CD4-positive, alpha-beta T cell (primary cell): ENCODE measurements at regions of chr3 and their contacts with region 1.

Region 1: DNA sequence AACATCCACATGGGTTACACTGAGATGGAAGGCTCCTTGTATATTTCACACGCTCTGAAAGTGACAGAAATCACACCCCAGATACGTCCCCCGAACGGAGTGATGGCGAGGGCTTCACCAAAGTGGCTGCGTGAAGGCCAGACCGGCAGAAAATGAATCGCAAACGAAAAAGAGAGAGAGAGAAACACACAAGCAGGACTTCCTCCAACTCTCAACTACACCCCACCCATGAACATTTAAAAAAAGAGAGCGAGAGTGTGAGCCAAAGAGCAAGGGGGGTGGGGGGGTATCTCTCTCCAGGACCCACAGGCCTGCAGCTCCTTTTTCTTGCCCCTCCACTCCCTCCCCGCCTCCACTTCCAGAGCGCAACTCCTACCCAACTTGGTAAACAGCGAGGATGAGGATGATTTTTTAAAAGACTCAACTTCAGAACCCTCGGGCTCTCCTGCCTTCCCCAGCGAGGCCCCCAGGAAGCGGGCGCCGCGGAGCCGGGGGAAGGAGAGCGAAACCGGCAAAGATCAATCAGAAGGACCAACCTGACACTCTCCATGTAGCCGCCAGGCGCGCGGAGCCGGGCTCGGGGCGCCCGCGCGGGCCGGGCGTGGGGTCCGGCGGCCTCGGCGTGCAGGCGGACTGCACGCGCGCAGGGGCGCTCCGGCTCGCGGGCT is 519.1 kb downstream of the FOXP1 start:
- DNase-seq: peak; percentile 45 to 86 (median 64)
- ATAC-seq: peak; percentile 41
- H3K4me3 ChIP-seq: peak overlapping the region; percentile 71
- H3K4me3 Mint-ChIP-seq: no peak overlapping the region
- H3K27ac ChIP-seq: peak overlapping the region; percentile 72 to 97
- H3K27ac Mint-ChIP-seq: no peak overlapping the region
- H3K4me1 ChIP-seq: peaks cover 29% of the 10 kb centered on the region
- H3K4me1 Mint-ChIP-seq: peaks cover 62% of the 10 kb centered on the region
- H3K27me3 ChIP-seq: no peaks in the 10 kb centered on the region
- H3K27me3 Mint-ChIP-seq: no peaks in the 10 kb centered on the region
- CTCF ChIP-seq: no peak

Region 2: GRCh38 chr3:71006810-71007785 is 57.3 kb before region 1 on chr3:
- CTCF ChIA-PET with region 1: interaction called, 6 read pairs
- POLR2A ChIA-PET with region 1: interaction called, 6 read pairs
- intact Hi-C with region 1: loop called (anchors 2 kb)
- DNase-seq: peak in 3 of 14 experiments; percentile 61 to 66 (median 63)
- ATAC-seq: no peak
- H3K4me3 ChIP-seq: no peak overlapping the region
- H3K4me3 Mint-ChIP-seq: peak overlapping the region; percentile 22
- H3K27ac ChIP-seq: no peak overlapping the region
- H3K27ac Mint-ChIP-seq: peak overlapping the region; percentile 96
- H3K4me1 ChIP-seq: peaks cover 38% of the 10 kb centered on the region
- H3K4me1 Mint-ChIP-seq: peaks cover 83% of the 10 kb centered on the region
- H3K27me3 ChIP-seq: no peaks in the 10 kb centered on the region
- H3K27me3 Mint-ChIP-seq: no peaks in the 10 kb centered on the region
- CTCF ChIP-seq: peak; percentile 76

Region 3: GRCh38 chr3:71050538-71051258 is 13.7 kb before region 1 on chr3:
- CTCF ChIA-PET with region 1: interaction called, 6 read pairs
- POLR2A ChIA-PET with region 1: interaction called, 104 read pairs
- intact Hi-C with region 1: loop called (anchors 1 to 2 kb)
- DNase-seq: peak in 7 of 14 experiments; percentile 13 to 87 (median 54)
- ATAC-seq: peak; percentile 92
- H3K4me3 ChIP-seq: no peak overlapping the region
- H3K4me3 Mint-ChIP-seq: peak overlapping the region; percentile 55
- H3K27ac ChIP-seq: peak overlapping the region; percentile 6 to 73
- H3K27ac Mint-ChIP-seq: no peak overlapping the region
- H3K4me1 ChIP-seq: peaks cover 61% of the 10 kb centered on the region
- H3K4me1 Mint-ChIP-seq: peaks cover 100% of the 10 kb centered on the region
- H3K27me3 ChIP-seq: no peaks in the 10 kb centered on the region
- H3K27me3 Mint-ChIP-seq: no peaks in the 10 kb centered on the region
- CTCF ChIP-seq: no peak

Region 4: DNA sequence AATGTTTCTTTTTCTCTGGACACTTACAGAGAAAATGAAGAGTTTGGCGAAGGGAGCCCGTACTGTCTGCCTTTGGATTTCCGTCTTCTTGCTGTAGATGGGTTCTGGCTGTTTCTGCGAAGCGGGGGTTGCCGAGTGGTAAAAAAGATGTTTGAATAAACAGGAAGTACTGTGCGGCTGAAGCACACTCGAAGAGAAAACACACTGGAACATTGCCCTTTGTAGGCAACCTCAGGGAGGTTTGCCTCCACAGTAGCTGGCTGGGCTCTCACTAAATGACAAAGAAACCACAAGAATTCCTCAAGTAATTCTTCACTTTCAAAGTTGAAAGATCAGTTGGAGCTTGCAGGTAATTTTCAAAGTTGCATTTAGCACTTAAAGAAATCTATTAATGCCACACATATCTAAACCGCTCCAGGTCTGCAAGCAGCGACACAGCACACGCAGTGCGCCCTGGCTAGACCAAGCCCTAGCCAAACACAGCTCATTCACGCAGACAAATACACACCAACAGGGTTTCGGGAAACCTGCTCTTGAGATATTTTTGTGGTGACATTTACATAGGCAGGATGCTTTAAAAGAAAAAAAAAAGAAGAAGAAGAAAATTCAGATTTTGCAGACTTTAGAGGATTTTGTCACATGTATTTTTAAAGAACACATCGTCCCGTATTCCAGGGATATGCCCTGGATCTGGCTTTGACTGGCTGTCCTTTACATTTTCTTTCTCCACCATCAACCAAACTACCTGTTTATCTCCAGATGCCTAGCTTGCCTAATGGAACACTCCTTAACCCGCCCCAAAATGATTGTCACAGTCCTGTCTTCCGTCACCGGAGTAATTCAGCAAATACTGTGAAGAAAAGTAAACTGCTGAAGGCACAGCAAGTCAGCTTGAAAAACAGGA is 66.3 kb after region 1 on chr3:
- CTCF ChIA-PET with region 1: no interaction called
- POLR2A ChIA-PET with region 1: interaction called, 70 read pairs
- intact Hi-C with region 1: loop called in 1 of 2 experiments (anchors 1 kb)
- DNase-seq: peak; percentile 56 to 89 (median 73)
- ATAC-seq: peak; percentile 76
- H3K4me3 ChIP-seq: peak overlapping the region; percentile 70
- H3K4me3 Mint-ChIP-seq: peak overlapping the region; percentile 91
- H3K27ac ChIP-seq: peak overlapping the region; percentile 79 to 93
- H3K27ac Mint-ChIP-seq: peak overlapping the region; percentile 98
- H3K4me1 ChIP-seq: peaks cover 53% of the 10 kb centered on the region
- H3K4me1 Mint-ChIP-seq: peaks cover 88% of the 10 kb centered on the region
- H3K27me3 ChIP-seq: no peaks in the 10 kb centered on the region
- H3K27me3 Mint-ChIP-seq: no peaks in the 10 kb centered on the region
- CTCF ChIP-seq: no peak

Region 5: DNA sequence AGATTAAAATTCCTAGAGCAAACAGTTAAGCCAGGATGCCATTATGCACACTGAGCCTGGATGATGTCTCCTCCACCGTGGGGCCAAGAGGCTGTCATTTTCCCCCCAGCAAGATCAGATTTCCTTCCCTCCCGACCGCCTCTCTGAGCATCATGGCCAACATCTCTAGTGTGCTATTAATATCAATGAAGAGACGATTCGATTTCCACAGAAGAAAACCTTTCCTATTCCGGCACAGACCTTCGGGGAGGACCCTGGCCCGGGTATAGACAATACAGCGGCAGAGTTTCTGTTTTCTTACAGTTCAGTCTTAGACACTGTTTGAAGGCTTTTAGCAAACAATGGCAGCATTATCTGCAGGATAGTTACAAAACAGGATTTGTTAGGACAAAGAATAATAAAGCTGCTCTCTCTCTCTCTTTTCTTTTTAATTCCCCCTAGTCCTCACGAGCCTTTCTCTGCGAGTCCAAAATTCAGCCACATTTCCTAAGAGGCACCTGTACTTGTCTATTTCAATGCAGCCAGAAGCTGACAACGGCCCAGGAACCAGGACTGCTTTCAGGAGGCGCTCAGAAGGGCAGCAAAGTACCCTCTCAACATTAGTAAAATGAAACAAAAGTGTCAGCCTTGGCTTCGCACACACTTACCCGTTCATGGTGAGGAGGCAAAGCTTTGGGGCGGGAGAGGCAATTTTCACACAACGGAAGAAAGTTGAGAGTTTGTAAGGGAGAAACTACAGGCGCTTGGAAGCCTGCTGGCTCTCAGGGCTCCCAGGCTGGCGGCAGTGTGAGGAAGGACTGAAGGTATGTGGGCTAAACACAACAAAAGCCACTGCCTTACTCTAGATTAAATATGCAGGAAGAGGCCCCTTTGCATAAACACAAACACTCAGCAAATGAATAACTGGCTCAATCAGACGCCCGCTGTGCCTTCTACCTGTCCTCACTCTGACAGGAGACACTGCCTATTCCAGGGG is 241.1 kb after region 1 on chr3:
- CTCF ChIA-PET with region 1: no interaction called
- POLR2A ChIA-PET with region 1: interaction called, 5 read pairs
- intact Hi-C with region 1: loop called in 1 of 2 experiments (anchors 2 kb)
- DNase-seq: peak in 9 of 14 experiments; percentile 12 to 50 (median 19)
- ATAC-seq: peak; percentile 44
- H3K4me3 ChIP-seq: peak overlapping the region; percentile 60
- H3K4me3 Mint-ChIP-seq: peak overlapping the region; percentile 87
- H3K27ac ChIP-seq: peak overlapping the region; percentile 6 to 69
- H3K27ac Mint-ChIP-seq: peak overlapping the region; percentile 93
- H3K4me1 ChIP-seq: peaks cover 24% of the 10 kb centered on the region
- H3K4me1 Mint-ChIP-seq: peaks cover 96% of the 10 kb centered on the region
- H3K27me3 ChIP-seq: no peaks in the 10 kb centered on the region
- H3K27me3 Mint-ChIP-seq: no peaks in the 10 kb centered on the region
- CTCF ChIP-seq: no peak

Region 6: GRCh38 chr3:71444028-71444860 is 379.8 kb after region 1 on chr3:
- CTCF ChIA-PET with region 1: no interaction called
- POLR2A ChIA-PET with region 1: interaction called, 5 read pairs
- intact Hi-C with region 1: loop called in 1 of 2 experiments (anchors 5 kb)
- DNase-seq: peak; percentile 53 to 95 (median 68)
- ATAC-seq: peak; percentile 78
- H3K4me3 ChIP-seq: no peak overlapping the region
- H3K4me3 Mint-ChIP-seq: peak overlapping the region; percentile 79
- H3K27ac ChIP-seq: peak overlapping the region; percentile 67 to 82
- H3K27ac Mint-ChIP-seq: peak overlapping the region; percentile 94
- H3K4me1 ChIP-seq: peaks cover 97% of the 10 kb centered on the region
- H3K4me1 Mint-ChIP-seq: peaks cover 97% of the 10 kb centered on the region
- H3K27me3 ChIP-seq: no peaks in the 10 kb centered on the region
- H3K27me3 Mint-ChIP-seq: no peaks in the 10 kb centered on the region
- CTCF ChIP-seq: no peak